Left ventricle myocardium superior (tissue), 1 donor: ENCODE measurements at regions of chr5 and their contacts with region 1.

Region 1: DNA sequence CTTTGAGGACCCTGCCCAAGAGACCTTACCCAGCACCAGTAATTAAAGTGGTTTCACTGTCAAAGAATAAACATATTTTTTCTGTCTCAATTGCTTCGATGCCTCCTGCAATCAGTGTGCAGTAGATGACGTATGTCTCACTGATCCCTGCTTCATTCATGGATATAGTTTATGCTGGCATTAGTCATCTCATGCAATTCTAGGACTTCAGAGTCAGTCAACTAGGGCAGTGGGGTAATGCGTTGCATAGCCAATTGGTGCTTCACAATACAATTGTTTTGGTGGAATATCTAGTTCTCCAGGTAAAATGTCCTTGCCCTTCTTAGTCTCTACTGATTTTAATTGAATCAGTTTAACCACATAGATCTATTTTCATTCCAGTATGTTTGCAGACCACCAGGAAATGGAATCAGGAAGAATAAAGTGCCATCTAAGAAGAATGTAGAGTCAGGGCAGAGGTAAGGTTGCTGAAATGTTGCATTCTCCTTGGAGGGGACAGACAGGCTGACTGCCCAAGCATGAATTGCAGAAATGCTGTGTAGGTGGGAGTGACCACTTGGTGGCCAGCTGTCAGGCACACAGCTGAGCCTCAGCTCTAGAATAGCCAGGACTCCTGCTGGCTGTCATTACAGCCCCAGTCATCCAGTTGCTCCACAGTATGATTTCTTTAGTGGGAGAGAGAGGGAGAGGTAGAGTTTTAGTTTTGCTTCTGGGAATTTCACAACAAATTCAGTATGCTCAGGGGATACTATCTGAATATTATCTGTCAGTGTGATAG is 73.5 kb upstream of the MEGF10 start:
- DNase-seq: no peak
- ATAC-seq: no peak

Region 2: GRCh38 chr5:127153031-127153430 is 64.1 kb before region 1 on chr5:
- intact Hi-C with region 1: loop called (anchors 5 kb)
- DNase-seq: no peak
- ATAC-seq: no peak

Region 3: GRCh38 chr5:128913551-128913950 is 1696.5 kb after region 1 on chr5:
- intact Hi-C with region 1: no loop called
- DNase-seq: no peak
- ATAC-seq: no peak